CD14-positive monocyte (primary cell): ENCODE measurements at regions of chr4 and their contacts with region 1.

Region 1: GRCh38 chr4:1752284-1753041 is 31.1 kb downstream of the TACC3 start:
- DNase-seq: peak; percentile 31 to 61 (median 38)
- H3K4me3 ChIP-seq: peak overlapping the region in 2 of 3 experiments; percentile 25 to 70
- H3K4me3 Mint-ChIP-seq: peak overlapping the region; percentile 43 to 51
- H3K27ac ChIP-seq: peak overlapping the region; percentile 20 to 73
- H3K27ac Mint-ChIP-seq: peak overlapping the region in 3 of 7 donors; percentile 12 to 25 (median 20)
- H3K4me1 ChIP-seq: peaks cover 26 to 29% of the 10 kb centered on the region in 2 donors
- H3K4me1 Mint-ChIP-seq: peaks cover 10% of the 10 kb centered on the region
- H3K27me3 ChIP-seq: peaks cover 0 to 6% of the 10 kb centered on the region in 2 donors
- H3K27me3 Mint-ChIP-seq: peaks cover 0 to 6% (median 2%) of the 10 kb centered on the region in 3 donors
- CTCF ChIP-seq: no peak

Region 2: GRCh38 chr4:1809754-1810511 is 57.5 kb after region 1 on chr4:
- intact Hi-C with region 1: loop called (anchors 1 to 5 kb)
- DNase-seq: peak; percentile 32 to 51 (median 50)
- H3K4me3 ChIP-seq: no peak overlapping the region
- H3K4me3 Mint-ChIP-seq: no peak overlapping the region
- H3K27ac ChIP-seq: no peak overlapping the region
- H3K27ac Mint-ChIP-seq: no peak overlapping the region
- H3K4me1 ChIP-seq: no peaks in the 10 kb centered on the region
- H3K4me1 Mint-ChIP-seq: no peaks in the 10 kb centered on the region
- H3K27me3 ChIP-seq: no peaks in the 10 kb centered on the region
- H3K27me3 Mint-ChIP-seq: peaks cover 0 to 4% (median 2%) of the 10 kb centered on the region in 3 donors
- CTCF ChIP-seq: peak; percentile 92

Region 3: GRCh38 chr4:1883583-1883982 is 131.1 kb after region 1 on chr4:
- intact Hi-C with region 1: no loop called
- DNase-seq: no peak
- H3K4me3 ChIP-seq: no peak overlapping the region
- H3K4me3 Mint-ChIP-seq: no peak overlapping the region
- H3K27ac ChIP-seq: no peak overlapping the region
- H3K27ac Mint-ChIP-seq: peak overlapping the region in 1 of 7 donors; percentile 15
- H3K4me1 ChIP-seq: peaks cover 9 to 16% of the 10 kb centered on the region in 2 donors
- H3K4me1 Mint-ChIP-seq: peaks cover 33% of the 10 kb centered on the region
- H3K27me3 ChIP-seq: no peaks in the 10 kb centered on the region
- H3K27me3 Mint-ChIP-seq: no peaks in the 10 kb centered on the region
- CTCF ChIP-seq: no peak